PC-3 (cell line): ENCODE measurements at regions of chr2 and their contacts with region 1.

Region 1: DNA sequence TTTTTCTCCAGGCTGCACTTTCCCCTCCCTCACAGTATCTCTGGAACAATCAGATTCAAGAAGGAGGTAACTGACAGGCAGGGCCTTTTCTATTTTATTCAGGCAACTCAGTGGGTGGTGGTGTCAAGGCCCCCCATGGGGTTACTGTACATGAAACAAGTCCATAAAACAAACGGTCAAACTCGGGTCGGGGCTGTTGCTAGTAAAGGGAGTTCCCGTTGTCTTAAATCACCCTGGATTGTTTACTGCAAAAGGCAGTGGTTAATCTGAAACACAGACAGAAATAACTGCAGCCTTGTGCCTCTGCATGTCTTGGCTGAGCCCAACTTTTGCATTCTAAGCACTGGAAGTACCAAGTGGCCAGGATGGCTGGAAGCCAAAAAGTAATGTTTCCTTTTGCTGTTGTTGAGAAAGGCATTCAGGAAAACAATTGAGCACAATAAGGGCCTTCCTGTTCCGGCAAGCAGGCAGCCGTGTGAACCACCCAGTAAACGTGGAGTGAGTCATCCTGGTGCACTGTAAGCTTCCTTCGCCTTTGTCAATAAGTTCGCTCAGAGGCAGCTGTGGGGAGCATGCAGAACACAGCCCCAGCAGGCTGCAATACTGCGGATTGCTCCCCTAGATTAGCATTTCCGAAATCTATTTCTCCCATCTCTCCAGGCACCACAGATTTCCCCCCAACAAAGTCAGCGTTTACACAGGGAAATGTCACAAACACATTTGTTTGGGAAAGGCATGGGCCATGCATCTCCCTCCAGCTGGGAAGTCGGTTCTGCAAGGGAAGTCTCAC is 149.6 kb downstream of the IRS1 start:
- DNase-seq: peak; percentile 98
- ATAC-seq: peak; percentile 91
- H3K4me3 ChIP-seq: no peak overlapping the region
- H3K27ac ChIP-seq: peak overlapping the region; percentile 97
- H3K4me1 ChIP-seq: peaks cover 43% of the 10 kb centered on the region
- H3K27me3 ChIP-seq: no peaks in the 10 kb centered on the region
- CTCF ChIP-seq: no peak

Region 2: DNA sequence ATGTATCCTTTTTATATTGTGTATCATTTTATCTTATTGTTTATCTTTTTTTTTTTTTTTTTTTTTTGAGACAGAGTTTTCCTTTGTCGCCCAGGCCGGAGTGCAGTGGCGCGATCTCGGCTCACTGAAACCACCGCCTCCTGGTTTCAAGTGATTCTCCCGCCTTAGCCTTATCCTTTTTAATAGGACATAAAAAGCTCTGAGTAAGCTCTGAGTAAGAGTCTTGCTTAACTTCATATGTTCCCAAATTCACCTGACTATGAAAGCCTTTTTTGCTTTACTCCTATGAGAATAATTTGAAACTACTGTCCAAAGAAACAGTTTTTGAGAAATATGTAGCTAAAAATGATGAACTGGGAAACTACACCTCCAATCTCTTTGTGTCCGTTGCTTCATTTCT is 375.9 kb before region 1 on chr2:
- CTCF ChIA-PET with region 1: no interaction called
- POLR2A ChIA-PET with region 1: no interaction called
- intact Hi-C with region 1: loop called (anchors 5 kb)
- DNase-seq: peak; percentile 89
- ATAC-seq: peak; percentile 92
- H3K4me3 ChIP-seq: peak overlapping the region; percentile 7; the same call in 1 of the 2 replicates
- H3K27ac ChIP-seq: peak overlapping the region; percentile 68
- H3K4me1 ChIP-seq: peaks cover 17% of the 10 kb centered on the region
- H3K27me3 ChIP-seq: no peaks in the 10 kb centered on the region
- CTCF ChIP-seq: no peak

Region 3: DNA sequence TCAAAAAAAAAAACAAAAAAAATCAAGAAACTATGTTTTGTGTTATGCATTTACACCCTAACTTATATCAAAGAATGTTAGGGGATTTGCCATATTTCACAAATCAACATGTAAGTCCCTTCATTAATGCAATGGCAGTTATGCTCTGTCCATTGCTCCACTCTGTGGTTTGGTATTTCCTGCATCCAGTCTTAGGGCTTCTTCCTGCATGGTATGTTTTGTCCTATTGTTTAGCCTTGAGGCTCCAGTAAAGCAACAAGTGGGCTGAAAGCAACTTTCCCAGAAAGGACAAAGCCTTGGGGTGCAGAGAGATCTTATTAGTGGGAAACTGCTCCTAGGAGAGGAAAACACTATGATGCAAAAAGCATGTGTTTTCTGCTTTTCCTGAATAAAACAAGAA is 324.5 kb before region 1 on chr2:
- CTCF ChIA-PET with region 1: no interaction called
- POLR2A ChIA-PET with region 1: no interaction called
- intact Hi-C with region 1: loop called (anchors 5 kb)
- DNase-seq: no peak
- ATAC-seq: no peak
- H3K4me3 ChIP-seq: no peak overlapping the region
- H3K27ac ChIP-seq: no peak overlapping the region
- H3K4me1 ChIP-seq: peaks cover 11% of the 10 kb centered on the region
- H3K27me3 ChIP-seq: no peaks in the 10 kb centered on the region
- CTCF ChIP-seq: no peak

Region 4: DNA sequence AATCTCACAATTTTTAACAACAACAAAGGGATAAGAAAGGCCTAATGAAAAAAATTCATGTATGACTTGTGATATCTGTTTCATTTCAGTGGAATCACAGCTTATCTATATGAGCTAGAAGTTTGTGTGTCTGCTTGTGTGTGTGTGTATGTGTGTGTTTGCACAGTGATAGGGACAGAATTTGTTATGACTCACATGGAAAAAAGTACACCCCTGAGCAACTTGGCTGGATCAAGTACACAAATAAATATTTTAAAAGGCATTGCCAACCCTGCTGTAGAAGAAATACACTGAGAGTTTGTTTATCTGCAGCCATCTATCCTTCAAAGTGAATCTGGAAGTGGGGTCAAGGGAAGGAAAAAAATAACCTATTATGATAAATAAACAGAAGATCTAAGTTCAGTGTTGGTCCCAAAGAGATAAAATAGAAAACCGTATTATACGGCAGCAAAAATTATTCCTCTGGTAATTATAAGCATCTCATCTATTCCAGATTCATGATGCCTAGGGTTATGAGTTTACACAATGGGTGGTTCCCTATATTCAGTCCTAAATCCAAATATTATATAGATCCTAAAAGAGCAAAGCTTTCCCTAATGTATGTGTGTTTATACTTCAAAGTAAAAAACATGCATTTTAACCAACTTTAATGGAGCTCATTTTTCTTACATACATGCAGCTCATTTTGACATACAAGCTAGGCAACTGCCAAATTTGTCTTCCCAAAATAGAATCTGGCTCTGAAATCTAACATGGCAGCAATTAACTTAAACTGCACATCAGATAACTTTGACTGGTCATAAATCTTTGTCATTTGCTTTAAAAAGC is 271.1 kb before region 1 on chr2:
- CTCF ChIA-PET with region 1: no interaction called
- POLR2A ChIA-PET with region 1: no interaction called
- intact Hi-C with region 1: loop called (anchors 2 kb)
- DNase-seq: peak; percentile 81
- ATAC-seq: peak; percentile 89
- H3K4me3 ChIP-seq: no peak overlapping the region
- H3K27ac ChIP-seq: peak overlapping the region; percentile 33
- H3K4me1 ChIP-seq: peaks cover 18% of the 10 kb centered on the region
- H3K27me3 ChIP-seq: no peaks in the 10 kb centered on the region
- CTCF ChIP-seq: no peak

Region 5: GRCh38 chr2:226618875-226619605 is 31.0 kb before region 1 on chr2:
- CTCF ChIA-PET with region 1: no interaction called
- POLR2A ChIA-PET with region 1: no interaction called
- intact Hi-C with region 1: no loop called
- DNase-seq: no peak
- ATAC-seq: no peak
- H3K4me3 ChIP-seq: no peak overlapping the region
- H3K27ac ChIP-seq: no peak overlapping the region
- H3K4me1 ChIP-seq: peaks cover 10% of the 10 kb centered on the region
- H3K27me3 ChIP-seq: no peaks in the 10 kb centered on the region
- CTCF ChIP-seq: no peak

Region 6: GRCh38 chr2:226984750-226985582 is 334.9 kb after region 1 on chr2:
- CTCF ChIA-PET with region 1: no interaction called
- POLR2A ChIA-PET with region 1: no interaction called
- intact Hi-C with region 1: loop called (anchors 10 kb)
- DNase-seq: peak; percentile 75
- ATAC-seq: peak; percentile 83
- H3K4me3 ChIP-seq: no peak overlapping the region
- H3K27ac ChIP-seq: no peak overlapping the region
- H3K4me1 ChIP-seq: 0 out of 2 replicates have a peak, but pooled peaks cover 3% of the 10 kb centered on the region
- H3K27me3 ChIP-seq: no peaks in the 10 kb centered on the region
- CTCF ChIP-seq: peak; percentile 79